T-cell (primary cell): ENCODE measurements at regions of chr6 and their contacts with region 1.

Region 1: GRCh38 chr6:107674995-107675738 is 148.9 kb downstream of the SCML4 start:
- DNase-seq: peak; percentile 72 to 93 (median 85)
- ATAC-seq: peak; percentile 96 to 98 (median 97)
- H3K4me3 ChIP-seq: peak overlapping the region; percentile 11 to 41
- H3K4me3 Mint-ChIP-seq: peak overlapping the region; percentile 51 to 66 (median 65)
- H3K27ac ChIP-seq: peak overlapping the region; percentile 62
- H3K27ac Mint-ChIP-seq: peak overlapping the region; percentile 79 to 87
- H3K4me1 ChIP-seq: peaks cover 3 to 21% of the 10 kb centered on the region in 2 experiments
- H3K4me1 Mint-ChIP-seq: peaks cover 12 to 16% (median 16%) of the 10 kb centered on the region in 3 donors
- H3K27me3 ChIP-seq: no peaks in the 10 kb centered on the region
- H3K27me3 Mint-ChIP-seq: no peaks in the 10 kb centered on the region

Region 2: DNA sequence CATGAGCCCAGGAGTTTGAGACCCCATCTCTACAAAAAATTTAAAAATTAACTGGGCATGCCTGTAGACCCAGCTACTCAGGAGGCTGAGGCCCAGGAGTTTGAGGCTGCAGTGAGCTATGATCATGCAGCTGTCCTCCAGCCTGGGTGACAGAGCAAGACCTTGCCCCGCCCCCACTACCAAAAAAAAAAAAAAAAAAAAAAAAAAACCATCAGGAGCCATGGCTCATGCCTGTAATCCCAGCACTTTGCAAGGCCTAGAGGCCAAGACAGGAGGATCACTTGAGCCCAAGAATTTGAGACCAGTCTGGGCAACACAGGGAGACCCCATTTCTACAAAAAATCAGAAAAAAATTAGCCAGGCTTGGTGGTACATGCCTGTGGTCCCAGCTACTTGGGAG is 26.2 kb before region 1 on chr6:
- CTCF ChIA-PET with region 1: interaction called in 1 of 2 experiments, 11 read pairs
- POLR2A ChIA-PET with region 1: no interaction called
- DNase-seq: no peak
- ATAC-seq: no peak
- H3K4me3 ChIP-seq: no peak overlapping the region
- H3K4me3 Mint-ChIP-seq: no peak overlapping the region
- H3K27ac ChIP-seq: no peak overlapping the region
- H3K27ac Mint-ChIP-seq: no peak overlapping the region
- H3K4me1 ChIP-seq: no peaks in the 10 kb centered on the region
- H3K4me1 Mint-ChIP-seq: peaks cover 0 to 3% (median 3%) of the 10 kb centered on the region in 3 donors
- H3K27me3 ChIP-seq: peaks cover 0 to 11% of the 10 kb centered on the region in 2 experiments
- H3K27me3 Mint-ChIP-seq: peaks cover 0 to 4% of the 10 kb centered on the region in 2 donors

Region 3: GRCh38 chr6:107655245-107655644 is 19.9 kb before region 1 on chr6:
- CTCF ChIA-PET with region 1: interaction called in 1 of 2 experiments, 10 read pairs
- POLR2A ChIA-PET with region 1: interaction called in 1 of 2 experiments, 3 read pairs
- DNase-seq: no peak
- ATAC-seq: no peak
- H3K4me3 ChIP-seq: no peak overlapping the region
- H3K4me3 Mint-ChIP-seq: no peak overlapping the region
- H3K27ac ChIP-seq: no peak overlapping the region
- H3K27ac Mint-ChIP-seq: no peak overlapping the region
- H3K4me1 ChIP-seq: peaks cover 8 to 23% of the 10 kb centered on the region in 2 experiments
- H3K4me1 Mint-ChIP-seq: peaks cover 32 to 37% (median 35%) of the 10 kb centered on the region in 3 donors
- H3K27me3 ChIP-seq: no peaks in the 10 kb centered on the region
- H3K27me3 Mint-ChIP-seq: no peaks in the 10 kb centered on the region

Region 4: DNA sequence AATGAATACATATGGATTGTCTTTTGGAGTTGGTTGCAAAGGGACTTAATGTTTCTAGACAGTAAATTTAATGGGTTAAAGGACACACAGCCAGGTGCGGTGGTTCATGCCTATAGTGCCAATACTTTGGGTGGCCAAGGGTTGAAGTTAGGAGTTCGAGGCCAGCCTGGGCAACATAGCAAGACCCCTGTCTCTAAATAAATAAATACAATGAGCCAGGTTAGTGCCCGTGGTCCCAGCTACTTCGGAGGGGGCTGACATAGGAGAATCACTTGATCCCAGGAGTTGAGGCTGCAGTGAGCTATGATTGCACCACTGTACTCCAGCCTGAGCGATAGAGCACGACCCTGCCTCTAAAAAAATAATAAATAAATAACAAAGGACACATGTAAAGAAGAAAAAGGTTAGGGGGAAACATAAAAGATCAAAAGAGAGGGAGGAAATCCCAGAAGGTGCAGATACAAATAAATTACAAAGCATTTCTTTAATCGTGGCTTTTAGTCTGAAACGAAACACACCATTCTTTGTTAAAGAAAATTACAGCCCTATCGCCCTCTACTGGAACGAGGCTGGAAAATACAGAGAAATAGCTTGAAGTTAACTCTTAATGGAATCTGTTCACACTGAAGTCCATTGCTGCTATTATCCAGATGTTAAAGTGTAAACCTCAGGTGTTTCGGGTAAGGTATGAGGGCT is 191.6 kb after region 1 on chr6:
- CTCF ChIA-PET with region 1: interaction called, 11 to 15 read pairs
- POLR2A ChIA-PET with region 1: interaction called in 1 of 2 experiments, 3 read pairs
- DNase-seq: peak in 20 of 35 experiments; percentile 10 to 75 (median 20)
- ATAC-seq: peak; percentile 60 to 73 (median 67)
- H3K4me3 ChIP-seq: no peak overlapping the region
- H3K4me3 Mint-ChIP-seq: peak overlapping the region in 1 of 3 donors; percentile 31
- H3K27ac ChIP-seq: no peak overlapping the region
- H3K27ac Mint-ChIP-seq: no peak overlapping the region
- H3K4me1 ChIP-seq: peaks cover 0 to 4% of the 10 kb centered on the region in 2 experiments
- H3K4me1 Mint-ChIP-seq: peaks cover 0 to 7% (median 4%) of the 10 kb centered on the region in 3 donors
- H3K27me3 ChIP-seq: peaks cover 0 to 11% of the 10 kb centered on the region in 2 experiments
- H3K27me3 Mint-ChIP-seq: no peaks in the 10 kb centered on the region

Region 5: DNA sequence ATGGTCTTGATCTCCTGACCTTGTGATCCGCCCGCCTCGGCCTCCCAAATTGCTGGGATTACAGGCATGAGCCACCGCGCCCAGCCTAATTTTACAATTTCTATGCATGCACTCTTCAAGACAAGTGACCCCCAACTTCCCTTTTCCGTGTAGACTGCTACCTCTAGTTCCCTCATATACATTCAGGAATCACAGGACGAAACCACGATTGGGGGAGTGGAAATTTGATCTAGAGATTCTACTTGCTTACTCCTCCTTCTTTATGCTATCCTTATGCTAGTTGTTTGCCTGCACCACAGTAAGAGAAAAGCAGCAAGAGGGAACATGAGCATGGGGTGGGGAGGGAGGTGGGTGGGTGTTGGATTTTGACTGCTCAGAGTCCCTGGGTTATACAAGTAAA is 364.5 kb after region 1 on chr6:
- CTCF ChIA-PET with region 1: interaction called in 1 of 2 experiments, 10 read pairs
- POLR2A ChIA-PET with region 1: no interaction called
- DNase-seq: no peak
- ATAC-seq: no peak
- H3K4me3 ChIP-seq: no peak overlapping the region
- H3K4me3 Mint-ChIP-seq: no peak overlapping the region
- H3K27ac ChIP-seq: no peak overlapping the region
- H3K27ac Mint-ChIP-seq: no peak overlapping the region
- H3K4me1 ChIP-seq: no peaks in the 10 kb centered on the region
- H3K4me1 Mint-ChIP-seq: no peaks in the 10 kb centered on the region
- H3K27me3 ChIP-seq: no peaks in the 10 kb centered on the region
- H3K27me3 Mint-ChIP-seq: no peaks in the 10 kb centered on the region